MCF 10A (cell line): ENCODE measurements at regions of chr6 and their contacts with region 1.

Region 1: GRCh38 chr6:31834434-31835198 is 7.1 kb downstream of the HSPA1B start:
- DNase-seq: peak; percentile 87
- H3K4me3 Mint-ChIP-seq: peak overlapping the region; percentile 86
- H3K27ac Mint-ChIP-seq: peak overlapping the region; percentile 99
- H3K4me1 Mint-ChIP-seq: peaks cover 18% of the 10 kb centered on the region
- H3K27me3 Mint-ChIP-seq: no peaks in the 10 kb centered on the region
- CTCF ChIP-seq: no peak

Region 2: GRCh38 chr6:31806465-31807272 is 27.9 kb before region 1 on chr6 and contains the start of gene LSM2:
- CTCF ChIA-PET with region 1: interaction called, 6 read pairs
- POLR2A ChIA-PET with region 1: interaction called, 29 read pairs
- intact Hi-C with region 1: no loop called
- DNase-seq: peak; percentile 98
- H3K4me3 Mint-ChIP-seq: peak within 1 kb of the TSS; percentile 82
- H3K27ac Mint-ChIP-seq: peak within 1 kb of the TSS; percentile 84
- H3K4me1 Mint-ChIP-seq: peaks cover 6% of the 10 kb centered on the region
- H3K27me3 Mint-ChIP-seq: no peaks in the 10 kb centered on the region
- CTCF ChIP-seq: peak; percentile 27
- total RNA-seq, gene LSM2: 36.9 and 47.4 TPM in 2 replicates

Region 3: DNA sequence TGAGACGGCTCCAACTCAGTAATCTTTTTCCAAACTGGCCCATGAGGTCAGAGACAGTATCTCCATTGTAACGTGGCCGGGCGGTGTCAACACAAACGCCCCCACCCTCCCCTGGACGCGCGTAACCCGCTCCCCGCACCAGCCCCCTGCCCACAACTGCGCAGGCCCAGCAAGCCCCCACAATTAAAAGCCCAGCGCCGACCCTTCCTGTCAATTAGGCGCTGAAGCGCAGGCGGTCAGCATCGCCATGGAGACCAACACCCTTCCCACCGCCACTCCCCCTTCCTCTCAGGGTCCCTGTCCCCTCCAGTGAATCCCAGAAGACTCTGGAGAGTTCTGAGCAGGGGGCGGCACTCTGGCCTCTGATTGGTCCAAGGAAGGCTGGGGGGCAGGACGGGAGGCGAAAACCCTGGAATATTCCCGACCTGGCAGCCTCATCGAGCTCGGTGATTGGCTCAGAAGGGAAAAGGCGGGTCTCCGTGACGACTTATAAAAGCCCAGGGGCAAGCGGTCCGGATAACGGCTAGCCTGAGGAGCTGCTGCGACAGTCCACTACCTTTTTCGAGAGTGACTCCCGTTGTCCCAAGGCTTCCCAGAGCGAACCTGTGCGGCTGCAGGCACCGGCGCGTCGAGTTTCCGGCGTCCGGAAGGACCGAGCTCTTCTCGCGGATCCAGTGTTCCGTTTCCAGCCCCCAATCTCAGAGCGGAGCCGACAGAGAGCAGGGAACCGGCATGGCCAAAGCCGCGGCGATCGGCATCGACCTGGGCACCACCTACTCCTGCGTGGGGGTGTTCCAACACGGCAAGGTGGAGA is 19.4 kb before region 1 on chr6 and contains the starts of genes HSPA1A and HSPA1L:
- CTCF ChIA-PET with region 1: interaction called, 8 read pairs
- POLR2A ChIA-PET with region 1: interaction called, 202 read pairs
- intact Hi-C with region 1: no loop called
- DNase-seq: peak; percentile 99
- H3K4me3 Mint-ChIP-seq: peak within 1 kb of the TSS; percentile 89
- H3K27ac Mint-ChIP-seq: peak within 1 kb of the TSS; percentile 97
- H3K4me1 Mint-ChIP-seq: peaks cover 11% of the 10 kb centered on the region
- H3K27me3 Mint-ChIP-seq: no peaks in the 10 kb centered on the region
- CTCF ChIP-seq: no peak
- total RNA-seq, gene HSPA1A: 20.3 and 34.0 TPM in 2 replicates
- total RNA-seq, gene HSPA1L: 0.35 and 0.79 TPM in 2 replicates

Region 4: DNA sequence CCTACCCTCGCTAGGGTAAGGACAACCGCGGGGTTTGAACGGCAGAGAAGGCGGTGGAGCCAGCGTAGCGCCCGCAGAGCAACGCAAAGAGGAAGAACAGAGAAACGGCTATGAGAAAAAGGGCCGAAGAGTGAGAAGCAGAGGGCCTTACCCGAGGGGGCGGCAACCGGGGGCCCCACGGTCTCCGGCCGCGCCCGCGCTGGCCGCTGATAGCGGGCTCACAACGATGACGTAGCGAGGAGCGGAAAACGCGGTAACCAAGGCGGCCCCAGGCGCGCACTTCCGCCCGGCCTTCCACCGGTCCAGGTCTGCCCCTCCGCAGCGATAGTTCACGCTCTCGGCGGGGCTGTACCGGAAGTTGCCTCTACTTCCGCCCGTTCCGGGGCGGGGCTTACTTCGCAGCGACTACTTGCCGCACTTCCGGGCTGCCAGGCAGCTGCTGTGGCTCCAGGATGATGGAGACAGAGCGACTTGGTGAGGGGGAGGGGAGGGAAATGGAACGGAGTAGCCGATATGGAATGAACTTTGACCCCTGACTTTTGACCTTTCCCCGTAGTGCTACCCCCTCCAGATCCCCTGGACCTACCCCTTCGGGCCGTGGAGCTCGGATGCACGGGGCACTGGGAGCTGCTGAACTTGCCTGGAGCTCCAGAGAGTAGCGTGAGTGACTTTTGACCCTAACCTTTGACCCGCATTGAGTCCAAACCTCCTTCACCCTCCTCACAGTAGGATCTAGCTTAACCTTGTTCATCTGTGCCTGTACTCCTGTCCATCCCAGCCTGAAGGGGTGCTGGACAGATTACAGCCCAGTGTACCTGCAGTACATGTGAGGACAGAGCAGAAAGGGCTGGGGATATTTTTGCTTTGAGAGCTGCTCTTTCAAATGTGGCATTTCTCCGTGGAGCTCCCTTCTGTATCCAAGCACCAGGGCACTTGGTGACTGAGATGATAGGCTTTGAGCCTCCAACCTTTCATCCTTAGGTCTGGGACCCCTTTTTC is 124.4 kb after region 1 on chr6 and contains the starts of genes NELFE and SKIC2:
- CTCF ChIA-PET with region 1: no interaction called
- POLR2A ChIA-PET with region 1: interaction called, 3 read pairs
- intact Hi-C with region 1: loop called (anchors 10 kb)
- DNase-seq: peak; percentile 96
- H3K4me3 Mint-ChIP-seq: peak within 1 kb of the TSS; percentile 88
- H3K27ac Mint-ChIP-seq: peak within 1 kb of the TSS; percentile 97
- H3K4me1 Mint-ChIP-seq: peaks cover 9% of the 10 kb centered on the region
- H3K27me3 Mint-ChIP-seq: no peaks in the 10 kb centered on the region
- CTCF ChIP-seq: no peak
- total RNA-seq, gene NELFE: 90.7 and 113 TPM in 2 replicates
- total RNA-seq, gene SKIC2: 53.1 and 66.2 TPM in 2 replicates